ENCODE measurements at regions of chr12 and their contacts with region 1.

Region 1: GRCh38 chr12:103884316-103884715 is 43.3 kb upstream of the NT5DC3 start:
- DNase-seq: peak; percentile 65
- CTCF ChIP-seq: peak; percentile 58

Region 2: GRCh38 chr12:103758310-103759089 is 125.8 kb before region 1 on chr12:
- CTCF ChIA-PET with region 1: no interaction called
- POLR2A ChIA-PET with region 1: no interaction called
- DNase-seq: no peak
- CTCF ChIP-seq: no peak

Region 3: DNA sequence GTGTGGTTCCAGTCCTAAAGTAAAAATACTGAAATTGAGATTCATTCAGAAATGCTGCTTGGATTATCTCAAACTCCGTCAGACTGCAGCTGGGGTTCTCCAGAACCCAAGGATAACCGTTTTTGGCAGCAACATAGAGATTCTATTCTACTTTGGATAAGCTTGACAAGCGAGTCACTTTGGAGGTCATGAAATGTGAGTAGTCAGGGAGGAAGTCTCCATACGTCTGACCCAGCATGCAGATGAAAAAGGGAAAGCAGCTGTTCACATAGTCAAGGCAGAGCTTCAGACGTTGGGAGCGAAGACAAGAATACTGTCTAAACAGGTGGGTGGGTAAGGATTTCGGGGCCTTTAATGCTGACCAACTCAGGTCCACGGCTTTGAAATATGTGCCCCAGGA is 31.0 kb after region 1 on chr12:
- CTCF ChIA-PET with region 1: interaction called, 11 read pairs
- POLR2A ChIA-PET with region 1: no interaction called
- DNase-seq: no peak
- CTCF ChIP-seq: no peak

Region 4: DNA sequence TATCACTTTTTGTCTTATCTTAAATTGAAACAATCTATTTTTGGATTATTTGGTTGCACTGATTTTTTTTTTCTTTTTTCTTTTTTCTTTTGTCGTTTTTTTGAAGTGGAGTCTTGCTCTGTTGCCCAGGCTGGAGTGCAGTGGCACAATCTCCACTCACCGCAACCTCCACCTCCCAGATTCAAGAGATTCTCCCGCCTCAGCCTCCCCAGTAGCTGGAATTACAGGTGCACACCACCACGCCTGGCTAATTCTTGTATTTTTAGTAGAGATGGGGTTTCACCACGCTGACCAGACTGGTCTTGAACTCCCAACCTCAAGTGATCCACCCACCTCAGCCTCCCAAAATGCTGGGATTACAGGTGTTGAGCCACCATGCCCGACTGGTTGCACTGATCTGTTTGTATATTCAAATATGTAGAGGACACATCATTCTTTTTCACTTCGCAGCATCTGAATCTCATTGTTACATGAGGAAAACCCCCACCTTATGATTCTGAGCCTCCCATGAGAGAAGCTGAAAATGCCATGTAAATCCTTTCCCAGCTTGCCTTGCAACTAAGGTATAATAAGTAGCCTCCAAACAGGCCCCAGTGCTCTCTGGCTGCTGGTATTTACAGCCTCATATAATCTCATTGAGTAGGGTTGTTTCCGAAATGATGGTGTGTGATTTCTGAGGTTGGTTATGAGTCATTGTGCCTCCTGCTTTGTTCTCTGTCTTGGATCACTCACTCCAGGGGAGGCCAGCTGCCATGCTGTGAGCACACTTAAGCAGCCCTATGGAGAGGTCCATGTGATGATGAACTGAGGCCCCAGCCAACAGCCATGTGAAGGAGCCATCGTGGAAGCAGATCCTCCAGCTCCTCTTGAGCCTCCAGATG is 40.7 kb after region 1 on chr12:
- CTCF ChIA-PET with region 1: interaction called, 23 read pairs
- POLR2A ChIA-PET with region 1: interaction called, 4 read pairs
- DNase-seq: peak; percentile 60
- CTCF ChIP-seq: no peak

Region 5: DNA sequence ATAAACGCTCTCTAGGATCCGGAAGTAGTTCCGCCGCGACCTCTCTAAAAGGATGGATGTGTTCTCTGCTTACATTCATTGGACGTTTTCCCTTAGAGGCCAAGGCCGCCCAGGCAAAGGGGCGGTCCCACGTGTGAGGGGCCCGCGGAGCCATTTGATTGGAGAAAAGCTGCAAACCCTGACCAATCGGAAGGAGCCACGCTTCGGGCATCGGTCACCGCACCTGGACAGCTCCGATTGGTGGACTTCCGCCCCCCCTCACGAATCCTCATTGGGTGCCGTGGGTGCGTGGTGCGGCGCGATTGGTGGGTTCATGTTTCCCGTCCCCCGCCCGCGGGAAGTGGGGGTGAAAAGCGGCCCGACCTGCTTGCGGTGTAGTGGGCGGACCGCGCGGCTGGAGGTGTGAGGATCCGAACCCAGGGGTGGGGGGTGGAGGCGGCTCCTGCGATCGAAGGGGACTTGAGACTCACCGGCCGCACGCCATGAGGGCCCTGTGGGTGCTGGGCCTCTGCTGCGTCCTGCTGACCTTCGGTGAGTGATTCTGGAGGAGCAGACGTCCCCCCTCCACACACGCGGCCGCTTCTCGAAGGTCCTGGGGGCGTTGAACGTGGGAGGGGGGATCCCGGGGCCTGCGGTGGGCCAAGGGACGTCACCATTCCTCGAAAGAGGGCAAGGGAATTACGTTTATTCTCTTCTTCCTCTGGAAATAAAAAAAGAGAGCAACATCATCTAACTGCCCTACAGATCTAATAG is 45.9 kb after region 1 on chr12 and contains the start of gene HSP90B1:
- CTCF ChIA-PET with region 1: interaction called, 23 read pairs
- POLR2A ChIA-PET with region 1: interaction called, 4 read pairs
- DNase-seq: peak; percentile 99
- CTCF ChIP-seq: no peak

Region 6: DNA sequence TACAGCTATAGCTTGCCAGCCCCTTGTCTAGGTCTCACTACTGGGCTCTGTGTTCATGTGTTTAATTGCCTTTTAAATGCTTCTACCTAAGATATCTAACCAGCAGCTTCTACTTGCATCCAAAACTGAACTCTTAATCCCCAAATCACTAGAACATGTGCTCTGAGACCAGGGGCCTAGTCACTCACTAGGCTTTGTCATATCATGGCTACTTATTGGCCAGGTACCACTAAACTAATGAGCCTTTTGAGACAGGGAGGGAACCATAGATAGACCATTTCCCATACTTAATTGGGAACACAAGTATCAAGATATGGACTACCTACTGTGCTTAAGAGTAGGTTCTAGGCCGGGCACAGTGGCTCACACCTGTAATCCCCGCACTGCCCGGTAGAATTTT is 52.4 kb after region 1 on chr12:
- CTCF ChIA-PET with region 1: interaction called, 10 read pairs
- POLR2A ChIA-PET with region 1: no interaction called
- DNase-seq: no peak
- CTCF ChIP-seq: no peak

Region 7: DNA sequence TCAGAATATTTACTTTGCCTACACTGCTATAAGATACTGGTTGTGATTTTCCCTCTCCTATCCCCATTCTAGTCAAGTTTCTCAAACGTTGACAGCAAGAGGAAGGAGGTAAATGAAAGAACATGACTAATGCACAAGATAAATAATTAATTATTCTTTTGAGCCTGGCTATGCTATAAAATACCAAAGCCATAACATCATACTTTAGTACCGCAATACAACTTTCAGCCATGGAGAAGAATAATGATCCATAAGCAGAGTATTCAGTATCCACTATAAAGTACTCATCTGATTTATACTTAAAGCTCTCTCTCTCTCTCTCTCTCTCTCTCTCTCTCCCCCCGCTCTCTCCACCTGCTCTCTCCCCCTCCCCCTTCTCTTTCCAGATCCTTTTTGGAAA is 122.6 kb after region 1 on chr12:
- CTCF ChIA-PET with region 1: no interaction called
- POLR2A ChIA-PET with region 1: no interaction called
- DNase-seq: no peak
- CTCF ChIP-seq: no peak